CD8-positive, alpha-beta T cell (primary cell): ENCODE measurements at regions of chr3 and their contacts with region 1.

Region 1: GRCh38 chr3:58532794-58533220 is 4.2 kb downstream of the ACOX2 start:
- DNase-seq: peak; percentile 60 to 88 (median 75)
- ATAC-seq: peak; percentile 99
- H3K4me3 ChIP-seq: no peak overlapping the region
- H3K4me3 Mint-ChIP-seq: no peak overlapping the region
- H3K27ac ChIP-seq: no peak overlapping the region
- H3K27ac Mint-ChIP-seq: no peak overlapping the region
- H3K4me1 ChIP-seq: no peaks in the 10 kb centered on the region
- H3K4me1 Mint-ChIP-seq: peaks cover 7% of the 10 kb centered on the region
- H3K27me3 ChIP-seq: no peaks in the 10 kb centered on the region
- H3K27me3 Mint-ChIP-seq: no peaks in the 10 kb centered on the region
- CTCF ChIP-seq: peak; percentile 78

Region 2: DNA sequence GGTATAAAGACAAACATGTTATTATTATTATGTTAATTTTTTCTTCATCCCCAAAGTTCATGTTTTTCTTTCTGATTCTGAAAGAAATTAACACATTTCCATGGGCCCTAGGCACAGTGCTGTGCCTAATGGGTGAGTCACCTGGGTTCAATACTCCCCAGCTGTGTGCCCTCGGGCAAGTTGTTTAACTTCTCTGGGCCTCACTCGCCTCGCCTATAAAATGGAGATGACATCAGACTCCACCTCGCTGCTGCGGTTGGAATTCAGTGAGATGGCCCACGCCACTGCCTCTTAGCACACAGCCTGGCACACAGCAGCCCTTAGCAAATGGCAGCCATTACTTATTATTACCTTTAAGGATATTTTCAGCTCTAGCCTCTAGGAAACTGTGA is 344.6 kb before region 1 on chr3:
- CTCF ChIA-PET with region 1: interaction called, 3 read pairs
- POLR2A ChIA-PET with region 1: no interaction called
- intact Hi-C with region 1: loop called (anchors 2 kb)
- DNase-seq: no peak
- ATAC-seq: no peak
- H3K4me3 ChIP-seq: no peak overlapping the region
- H3K4me3 Mint-ChIP-seq: no peak overlapping the region
- H3K27ac ChIP-seq: no peak overlapping the region
- H3K27ac Mint-ChIP-seq: no peak overlapping the region
- H3K4me1 ChIP-seq: no peaks in the 10 kb centered on the region
- H3K4me1 Mint-ChIP-seq: no peaks in the 10 kb centered on the region
- H3K27me3 ChIP-seq: no peaks in the 10 kb centered on the region
- H3K27me3 Mint-ChIP-seq: no peaks in the 10 kb centered on the region
- CTCF ChIP-seq: no peak

Region 3: GRCh38 chr3:58324391-58325390 is 208.1 kb before region 1 on chr3:
- CTCF ChIA-PET with region 1: interaction called, 8 read pairs
- POLR2A ChIA-PET with region 1: no interaction called
- intact Hi-C with region 1: loop called (anchors 1 kb)
- DNase-seq: peak in 1 of 9 experiments; percentile 26
- ATAC-seq: peak; percentile 50
- H3K4me3 ChIP-seq: no peak overlapping the region
- H3K4me3 Mint-ChIP-seq: no peak overlapping the region
- H3K27ac ChIP-seq: no peak overlapping the region
- H3K27ac Mint-ChIP-seq: peak overlapping the region; percentile 52
- H3K4me1 ChIP-seq: peaks cover 7% of the 10 kb centered on the region
- H3K4me1 Mint-ChIP-seq: peaks cover 13% of the 10 kb centered on the region
- H3K27me3 ChIP-seq: no peaks in the 10 kb centered on the region
- H3K27me3 Mint-ChIP-seq: no peaks in the 10 kb centered on the region
- CTCF ChIP-seq: no peak

Region 4: GRCh38 chr3:58414538-58415197 is 118.1 kb before region 1 on chr3:
- CTCF ChIA-PET with region 1: interaction called, 3 read pairs
- POLR2A ChIA-PET with region 1: no interaction called
- intact Hi-C with region 1: loop called in 1 of 2 experiments (anchors 2 kb)
- DNase-seq: peak in 6 of 9 experiments; percentile 23 to 72 (median 42)
- ATAC-seq: peak; percentile 91
- H3K4me3 ChIP-seq: no peak overlapping the region
- H3K4me3 Mint-ChIP-seq: no peak overlapping the region
- H3K27ac ChIP-seq: no peak overlapping the region
- H3K27ac Mint-ChIP-seq: no peak overlapping the region
- H3K4me1 ChIP-seq: no peaks in the 10 kb centered on the region
- H3K4me1 Mint-ChIP-seq: no peaks in the 10 kb centered on the region
- H3K27me3 ChIP-seq: no peaks in the 10 kb centered on the region
- H3K27me3 Mint-ChIP-seq: no peaks in the 10 kb centered on the region
- CTCF ChIP-seq: peak; percentile 60

Region 5: GRCh38 chr3:58433400-58434169 is 99.2 kb before region 1 on chr3 and contains the start of gene PDHB:
- CTCF ChIA-PET with region 1: no interaction called
- POLR2A ChIA-PET with region 1: no interaction called
- intact Hi-C with region 1: loop called (anchors 1 to 5 kb)
- DNase-seq: peak; percentile 74 to 94 (median 88)
- ATAC-seq: peak; percentile 97
- H3K4me3 ChIP-seq: peak within 1 kb of the TSS; percentile 88 to 98
- H3K4me3 Mint-ChIP-seq: peak within 1 kb of the TSS; percentile 92
- H3K27ac ChIP-seq: peak within 1 kb of the TSS; percentile 86 to 87
- H3K27ac Mint-ChIP-seq: peak within 1 kb of the TSS; percentile 97
- H3K4me1 ChIP-seq: peaks cover 10% of the 10 kb centered on the region
- H3K4me1 Mint-ChIP-seq: peaks cover 25% of the 10 kb centered on the region
- H3K27me3 ChIP-seq: no peaks in the 10 kb centered on the region
- H3K27me3 Mint-ChIP-seq: no peaks in the 10 kb centered on the region
- CTCF ChIP-seq: no peak
- total RNA-seq, gene PDHB: 32.5 to 33.2 TPM

Region 6: DNA sequence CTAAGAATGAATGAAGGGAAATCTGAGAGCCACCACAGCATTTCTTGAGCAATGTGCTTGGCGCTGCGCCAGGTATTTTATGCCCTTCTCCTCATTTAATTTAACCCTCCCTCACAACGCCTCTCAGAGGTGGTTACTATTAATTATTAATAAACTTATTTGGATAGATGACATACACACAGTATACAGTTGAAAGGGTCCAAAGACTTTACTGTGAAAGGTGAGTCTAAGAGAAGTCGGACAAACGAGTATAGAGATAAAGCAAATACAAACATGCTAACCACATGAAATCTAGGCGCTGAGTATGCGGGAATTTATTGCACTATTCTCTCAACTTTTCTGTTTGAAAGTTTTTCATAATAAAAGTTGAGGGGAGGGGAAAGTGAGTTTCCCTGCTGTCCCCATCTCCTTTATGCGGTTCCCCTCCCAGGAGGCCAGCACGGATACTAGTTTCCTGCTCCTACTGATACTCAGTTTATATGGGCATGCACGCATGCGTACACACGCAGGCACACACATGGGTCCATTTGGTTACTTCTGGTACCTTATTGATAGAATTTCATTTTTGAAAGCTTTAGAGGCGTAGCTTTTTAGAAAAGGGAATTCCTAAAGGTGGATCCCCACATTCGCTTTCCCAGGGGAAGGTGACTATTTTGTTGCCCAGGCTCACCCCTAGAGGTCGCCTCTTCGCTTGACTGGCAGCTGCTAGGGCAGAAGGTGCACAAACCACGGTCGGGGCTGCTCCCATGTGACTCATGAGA is 69.4 kb before region 1 on chr3:
- CTCF ChIA-PET with region 1: interaction called, 9 read pairs
- POLR2A ChIA-PET with region 1: no interaction called
- intact Hi-C with region 1: loop called (anchors 1 kb)
- DNase-seq: peak; percentile 19 to 83 (median 73)
- ATAC-seq: peak; percentile 95
- H3K4me3 ChIP-seq: peak overlapping the region in 1 of 2 experiments; percentile 3
- H3K4me3 Mint-ChIP-seq: peak overlapping the region; percentile 51
- H3K27ac ChIP-seq: no peak overlapping the region
- H3K27ac Mint-ChIP-seq: no peak overlapping the region
- H3K4me1 ChIP-seq: peaks cover 8% of the 10 kb centered on the region
- H3K4me1 Mint-ChIP-seq: peaks cover 8% of the 10 kb centered on the region
- H3K27me3 ChIP-seq: no peaks in the 10 kb centered on the region
- H3K27me3 Mint-ChIP-seq: no peaks in the 10 kb centered on the region
- CTCF ChIP-seq: peak; percentile 80

Region 7: GRCh38 chr3:58491506-58492402 is 41.1 kb before region 1 on chr3 and contains the start of gene KCTD6:
- CTCF ChIA-PET with region 1: interaction called, 8 read pairs
- POLR2A ChIA-PET with region 1: no interaction called
- intact Hi-C with region 1: loop called (anchors 1 kb)
- DNase-seq: peak; percentile 74 to 93 (median 85)
- ATAC-seq: peak; percentile 81
- H3K4me3 ChIP-seq: peak within 1 kb of the TSS; percentile 72 to 88
- H3K4me3 Mint-ChIP-seq: peak within 1 kb of the TSS; percentile 93
- H3K27ac ChIP-seq: peak within 1 kb of the TSS; percentile 50 to 54
- H3K27ac Mint-ChIP-seq: peak within 1 kb of the TSS; percentile 91
- H3K4me1 ChIP-seq: peaks cover 45% of the 10 kb centered on the region
- H3K4me1 Mint-ChIP-seq: peaks cover 54% of the 10 kb centered on the region
- H3K27me3 ChIP-seq: no peaks in the 10 kb centered on the region
- H3K27me3 Mint-ChIP-seq: no peaks in the 10 kb centered on the region
- CTCF ChIP-seq: peak; percentile 33
- total RNA-seq, gene KCTD6: 4.2 to 4.5 TPM

Region 8: GRCh38 chr3:59266551-59266950 is 733.7 kb after region 1 on chr3:
- CTCF ChIA-PET with region 1: no interaction called
- POLR2A ChIA-PET with region 1: no interaction called
- intact Hi-C with region 1: no loop called
- DNase-seq: no peak
- ATAC-seq: no peak
- H3K4me3 ChIP-seq: no peak overlapping the region
- H3K4me3 Mint-ChIP-seq: no peak overlapping the region
- H3K27ac ChIP-seq: no peak overlapping the region
- H3K27ac Mint-ChIP-seq: no peak overlapping the region
- H3K4me1 ChIP-seq: no peaks in the 10 kb centered on the region
- H3K4me1 Mint-ChIP-seq: no peaks in the 10 kb centered on the region
- H3K27me3 ChIP-seq: no peaks in the 10 kb centered on the region
- H3K27me3 Mint-ChIP-seq: no peaks in the 10 kb centered on the region
- CTCF ChIP-seq: no peak